Activated CD4-positive, alpha-beta T cell treated with anti-CD3 and anti-CD28 coated beads for 36 hours (primary cell): ENCODE measurements at regions of chr4 and their contacts with region 1.

Region 1: GRCh38 chr4:21790438-21791029 is 158.0 kb downstream of the KCNIP4 start:
- DNase-seq: no peak
- ATAC-seq: no peak
- H3K4me3 Mint-ChIP-seq: no peak overlapping the region
- H3K27ac Mint-ChIP-seq: no peak overlapping the region
- H3K4me1 Mint-ChIP-seq: no peaks in the 10 kb centered on the region
- H3K27me3 Mint-ChIP-seq: no peaks in the 10 kb centered on the region

Region 2: DNA sequence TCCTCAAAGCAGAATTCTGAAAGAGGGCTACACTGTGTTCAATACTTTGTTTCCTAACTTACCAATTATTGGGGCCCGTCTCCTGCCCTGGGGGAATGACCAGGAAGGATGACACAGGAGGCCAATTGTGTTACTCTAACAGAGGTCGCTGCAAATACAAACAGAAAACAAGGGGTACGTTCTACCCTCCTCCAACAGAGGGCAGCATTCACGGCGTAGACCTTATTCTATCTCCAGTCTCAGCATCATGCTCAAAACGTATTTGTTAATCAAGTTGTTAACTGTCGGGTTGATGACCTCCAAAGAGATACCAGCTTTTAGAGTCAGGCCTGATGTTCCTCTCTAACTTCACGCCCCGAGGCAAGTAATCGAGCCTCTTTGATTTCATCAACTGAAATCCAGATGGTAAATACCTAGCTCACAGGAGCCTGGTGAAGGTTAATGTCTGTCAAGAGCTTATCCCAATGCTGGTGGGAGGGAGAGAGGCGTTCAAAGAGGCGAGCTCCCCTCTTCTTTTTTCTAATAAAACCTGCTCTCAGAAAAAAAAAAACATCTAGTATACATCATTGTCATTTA is 339.0 kb after region 1 on chr4:
- CTCF ChIA-PET with region 1: interaction called, 4 read pairs
- POLR2A ChIA-PET with region 1: no interaction called
- intact Hi-C with region 1: loop called in 1 of 2 experiments (anchors 1 kb)
- DNase-seq: peak; percentile 32
- ATAC-seq: no peak
- H3K4me3 Mint-ChIP-seq: no peak overlapping the region
- H3K27ac Mint-ChIP-seq: no peak overlapping the region
- H3K4me1 Mint-ChIP-seq: no peaks in the 10 kb centered on the region
- H3K27me3 Mint-ChIP-seq: no peaks in the 10 kb centered on the region

Region 3: GRCh38 chr4:22531311-22532019 is 740.9 kb after region 1 on chr4:
- CTCF ChIA-PET with region 1: no interaction called
- POLR2A ChIA-PET with region 1: no interaction called
- intact Hi-C with region 1: no loop called
- DNase-seq: no peak
- ATAC-seq: no peak
- H3K4me3 Mint-ChIP-seq: no peak overlapping the region
- H3K27ac Mint-ChIP-seq: no peak overlapping the region
- H3K4me1 Mint-ChIP-seq: no peaks in the 10 kb centered on the region
- H3K27me3 Mint-ChIP-seq: no peaks in the 10 kb centered on the region